Mammary epithelial cell (primary cell): ENCODE measurements at regions of chr6 and their contacts with region 1.

Region 1: DNA sequence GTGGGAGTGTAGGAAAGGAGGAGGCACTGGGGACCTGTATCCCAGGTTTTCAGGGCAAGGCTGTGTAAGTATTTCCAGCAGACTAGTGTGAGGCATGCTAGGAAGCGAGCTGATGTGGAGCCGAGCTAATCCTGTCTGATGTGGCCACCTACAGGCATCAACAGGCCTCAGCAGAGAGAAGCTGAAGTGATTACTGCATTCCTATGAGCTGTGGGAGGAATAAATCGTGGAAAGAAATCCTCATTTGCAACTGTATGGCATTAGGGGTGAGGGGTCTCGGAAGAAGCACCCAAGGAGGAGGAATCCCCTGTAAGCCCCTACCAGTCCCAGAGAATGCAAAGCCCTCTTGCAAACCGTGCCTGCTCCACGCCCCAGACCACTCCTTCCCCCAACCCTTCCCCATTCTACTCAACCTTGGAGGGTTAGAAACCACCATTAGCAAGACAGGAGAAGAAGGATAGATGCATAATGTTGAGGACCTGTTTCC is 41.6 kb downstream of the C6orf15 start:
- DNase-seq: peak; percentile 74
- H3K4me3 ChIP-seq: no peak overlapping the region
- H3K27ac ChIP-seq: no peak overlapping the region
- H3K4me1 ChIP-seq: peaks cover 4% of the 10 kb centered on the region
- H3K27me3 ChIP-seq: no peaks in the 10 kb centered on the region
- CTCF ChIP-seq: peak; percentile 87 to 93

Region 2: DNA sequence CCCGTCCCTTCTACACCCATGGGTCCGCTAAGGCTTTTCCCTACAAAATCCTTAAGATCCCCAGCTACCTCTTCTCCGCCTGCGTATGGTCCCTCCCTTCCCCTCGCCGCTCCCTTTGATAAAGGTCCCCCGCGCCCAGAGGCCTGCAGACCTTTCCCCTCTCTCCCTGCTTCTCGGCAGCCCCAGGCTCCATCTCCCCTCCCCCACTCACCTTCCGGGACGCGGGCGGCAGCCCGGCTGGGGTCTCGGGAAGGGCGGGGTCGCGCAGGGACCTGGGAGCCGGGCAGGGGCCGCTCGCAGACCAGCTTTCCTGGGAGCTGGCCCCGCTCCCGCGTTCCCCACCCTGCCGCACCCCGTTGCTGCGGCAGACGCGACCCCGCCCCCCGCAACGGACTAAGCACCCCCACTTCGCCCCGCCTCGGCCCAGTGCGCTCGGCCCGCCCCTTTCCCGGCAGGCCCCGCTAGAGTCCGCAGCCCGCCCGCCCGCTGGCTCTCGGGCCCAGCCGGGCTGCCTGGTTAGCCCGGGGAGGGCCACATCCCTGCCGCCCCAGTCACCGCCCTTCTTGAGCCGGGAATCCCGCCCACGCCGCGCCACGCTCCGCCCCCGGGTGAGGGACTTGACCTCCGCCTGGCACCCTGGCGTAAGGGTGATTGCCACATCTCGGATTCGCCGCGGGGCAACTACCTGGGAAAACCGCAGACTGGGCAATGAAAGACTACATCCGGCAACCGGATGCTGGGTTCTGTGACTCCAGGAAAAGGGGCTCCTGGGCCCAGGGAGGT is 328.2 kb before region 1 on chr6 and contains the start of gene FLOT1:
- CTCF ChIA-PET with region 1: interaction called, 3 read pairs
- dilution Hi-C with region 1: no loop called
- in situ Hi-C with region 1: no loop called
- intact Hi-C with region 1: loop called (anchors 5 kb)
- DNase-seq: peak; percentile 99
- H3K4me3 ChIP-seq: peak within 1 kb of the TSS; percentile 69 to 93 (median 76)
- H3K27ac ChIP-seq: peak within 1 kb of the TSS; percentile 91
- H3K4me1 ChIP-seq: peaks cover 21% of the 10 kb centered on the region
- H3K27me3 ChIP-seq: no peaks in the 10 kb centered on the region
- CTCF ChIP-seq: no peak
- total RNA-seq, gene FLOT1: 53.9 to 57.5 TPM

Region 3: GRCh38 chr6:30883685-30884520 is 186.9 kb before region 1 on chr6 and contains the start of gene DDR1:
- CTCF ChIA-PET with region 1: no interaction called
- dilution Hi-C with region 1: no loop called
- in situ Hi-C with region 1: no loop called
- intact Hi-C with region 1: loop called (anchors 1 kb)
- DNase-seq: peak; percentile 89
- H3K4me3 ChIP-seq: peak within 1 kb of the TSS; percentile 60 to 76 (median 73)
- H3K27ac ChIP-seq: peak within 1 kb of the TSS; percentile 95
- H3K4me1 ChIP-seq: peaks cover 58% of the 10 kb centered on the region
- H3K27me3 ChIP-seq: no peaks in the 10 kb centered on the region
- CTCF ChIP-seq: no peak
- total RNA-seq, gene DDR1: 192 to 315 TPM

Region 4: GRCh38 chr6:30942338-30943060 is 128.3 kb before region 1 on chr6:
- CTCF ChIA-PET with region 1: no interaction called
- dilution Hi-C with region 1: no loop called
- in situ Hi-C with region 1: no loop called
- intact Hi-C with region 1: loop called (anchors 1 kb)
- DNase-seq: peak; percentile 66
- H3K4me3 ChIP-seq: no peak overlapping the region
- H3K27ac ChIP-seq: no peak overlapping the region
- H3K4me1 ChIP-seq: peaks cover 21% of the 10 kb centered on the region
- H3K27me3 ChIP-seq: no peaks in the 10 kb centered on the region
- CTCF ChIP-seq: peak; percentile 48 to 71

Region 5: DNA sequence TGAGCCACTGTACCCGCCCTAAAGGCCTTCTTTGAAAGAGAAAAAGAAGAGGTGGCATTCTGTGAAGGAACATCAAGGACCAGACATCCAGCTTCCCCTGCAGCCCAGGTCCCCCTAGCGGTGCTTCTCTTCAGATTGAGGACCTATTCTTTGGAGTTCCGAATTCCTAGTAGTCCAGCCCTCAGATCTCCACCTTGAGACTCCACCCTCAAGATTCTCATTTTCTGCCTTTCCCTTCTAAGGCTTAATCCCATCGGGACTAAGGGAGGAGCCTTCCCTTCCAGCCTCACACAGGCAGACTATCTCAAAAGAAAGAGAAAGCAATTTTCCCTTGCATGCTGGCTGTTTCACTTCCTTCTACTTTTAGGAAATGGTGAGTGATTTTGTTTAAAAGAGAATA is 27.9 kb before region 1 on chr6:
- CTCF ChIA-PET with region 1: interaction called, 3 read pairs
- dilution Hi-C with region 1: no loop called
- in situ Hi-C with region 1: no loop called
- intact Hi-C with region 1: loop called (anchors 2 kb)
- DNase-seq: peak; percentile 57
- H3K4me3 ChIP-seq: no peak overlapping the region
- H3K27ac ChIP-seq: no peak overlapping the region
- H3K4me1 ChIP-seq: no peaks in the 10 kb centered on the region
- H3K27me3 ChIP-seq: no peaks in the 10 kb centered on the region
- CTCF ChIP-seq: peak; percentile 26 to 61

Region 6: DNA sequence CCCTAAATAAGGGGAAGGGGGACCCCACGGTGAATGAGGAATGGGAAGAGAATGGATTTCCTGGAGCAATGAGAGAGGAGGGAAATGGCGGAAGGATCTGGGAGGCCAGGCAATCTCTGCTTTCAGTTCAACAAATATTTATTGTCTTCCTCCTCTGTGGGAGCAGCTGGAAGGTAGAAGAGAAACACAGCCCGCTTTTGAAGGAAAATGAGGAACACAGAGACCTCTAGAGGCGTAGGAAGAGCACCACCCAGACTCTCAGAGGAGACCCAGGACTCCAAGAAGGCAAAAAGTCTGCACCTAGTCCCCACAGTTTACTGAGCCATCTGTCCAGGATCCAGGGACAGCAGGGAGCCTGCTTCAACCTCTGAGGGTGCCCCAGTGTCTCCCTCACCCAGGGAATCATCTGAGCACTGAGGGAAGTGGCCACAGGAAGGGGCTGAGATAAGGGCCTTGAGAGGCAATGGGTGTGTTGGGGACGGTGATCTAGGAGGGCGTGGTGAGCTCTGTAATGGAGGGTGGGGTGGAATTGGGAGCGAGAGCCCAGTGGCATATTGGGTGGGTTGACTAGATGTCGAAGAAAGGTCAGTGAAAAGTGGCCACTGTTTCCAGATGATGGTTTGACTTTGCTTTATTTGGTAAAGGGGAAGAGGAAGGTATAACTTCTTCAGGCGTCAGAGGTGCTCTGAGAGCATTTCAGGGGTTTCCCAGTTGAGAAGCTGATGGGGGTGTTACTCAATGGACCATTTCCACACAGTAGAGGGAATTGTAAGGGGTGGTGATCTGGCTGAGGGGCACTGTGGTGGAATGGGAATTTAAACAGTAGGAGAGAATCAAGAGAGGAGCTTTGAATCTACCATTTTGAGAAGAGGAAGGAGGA is 44.5 kb after region 1 on chr6:
- CTCF ChIA-PET with region 1: no interaction called
- dilution Hi-C with region 1: loop called (anchors 5 kb)
- in situ Hi-C with region 1: no loop called
- intact Hi-C with region 1: no loop called
- DNase-seq: peak; percentile 24
- H3K4me3 ChIP-seq: peak overlapping the region; percentile 31 to 52 (median 39)
- H3K27ac ChIP-seq: peak overlapping the region; percentile 91
- H3K4me1 ChIP-seq: peaks cover 39% of the 10 kb centered on the region
- H3K27me3 ChIP-seq: no peaks in the 10 kb centered on the region
- CTCF ChIP-seq: peak in 1 of 2 donors; percentile 52